ENCODE measurements at regions of chr20 and their contacts with region 1.

Region 1: DNA sequence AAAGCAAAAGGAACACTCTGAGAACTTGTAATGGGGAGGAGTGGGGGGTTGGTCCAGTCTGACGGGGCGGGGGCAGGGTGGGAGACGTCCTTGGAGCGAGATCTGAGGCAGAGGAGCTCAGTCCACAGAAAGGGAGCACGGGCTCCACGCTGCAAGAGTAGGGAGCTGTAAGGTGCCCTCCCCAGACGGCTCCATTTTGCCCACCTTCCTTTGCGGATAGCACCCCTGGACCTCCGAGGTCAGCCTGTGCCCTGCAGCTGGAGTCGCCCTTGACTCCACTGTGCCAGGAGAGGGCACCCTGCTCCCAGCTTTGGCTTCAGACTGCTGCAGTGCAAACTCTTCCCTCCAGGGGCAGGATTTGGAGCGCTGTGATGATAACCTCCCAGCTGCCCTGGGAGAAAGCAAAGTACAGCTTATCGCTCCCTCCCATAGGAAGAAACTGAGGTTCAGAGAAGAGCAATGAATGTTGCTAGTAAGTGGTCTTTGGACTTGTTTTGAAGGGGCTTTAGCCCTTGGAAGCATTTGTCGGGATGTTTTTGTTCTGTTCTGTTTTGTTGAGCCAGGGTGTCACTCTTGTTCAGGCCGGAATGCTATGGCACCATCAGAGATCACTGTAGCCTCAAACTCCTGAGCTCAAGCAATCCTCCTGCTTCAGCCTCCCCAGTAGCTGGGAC is 9.5 kb upstream of the AHCY start:
- DNase-seq: peak; percentile 75 to 92
- H3K4me3 ChIP-seq: no peak overlapping the region
- H3K27ac ChIP-seq: peak overlapping the region; percentile 98; the same call in 1 of the 2 replicates
- H3K4me1 ChIP-seq: peaks cover 50% of the 10 kb centered on the region
- H3K27me3 ChIP-seq: no peaks in the 10 kb centered on the region
- CTCF ChIP-seq: peak; percentile 98

Region 2: GRCh38 chr20:34324541-34324940 is 11.9 kb after region 1 on chr20:
- CTCF ChIA-PET with region 1: no interaction called
- POLR2A ChIA-PET with region 1: no interaction called
- intact Hi-C with region 1: no loop called
- DNase-seq: no peak
- H3K4me3 ChIP-seq: no peak overlapping the region
- H3K27ac ChIP-seq: no peak overlapping the region
- H3K4me1 ChIP-seq: peaks cover 12% of the 10 kb centered on the region
- H3K27me3 ChIP-seq: no peaks in the 10 kb centered on the region
- CTCF ChIP-seq: no peak

Region 3: GRCh38 chr20:34334654-34335407 is 22.1 kb after region 1 on chr20:
- CTCF ChIA-PET with region 1: interaction called, 5 read pairs
- POLR2A ChIA-PET with region 1: interaction called, 11 read pairs
- intact Hi-C with region 1: loop called (anchors 1 kb)
- DNase-seq: peak; percentile 43 to 60
- H3K4me3 ChIP-seq: no peak overlapping the region
- H3K27ac ChIP-seq: peak overlapping the region; percentile 92
- H3K4me1 ChIP-seq: peaks cover 40% of the 10 kb centered on the region
- H3K27me3 ChIP-seq: no peaks in the 10 kb centered on the region
- CTCF ChIP-seq: no peak

Region 4: DNA sequence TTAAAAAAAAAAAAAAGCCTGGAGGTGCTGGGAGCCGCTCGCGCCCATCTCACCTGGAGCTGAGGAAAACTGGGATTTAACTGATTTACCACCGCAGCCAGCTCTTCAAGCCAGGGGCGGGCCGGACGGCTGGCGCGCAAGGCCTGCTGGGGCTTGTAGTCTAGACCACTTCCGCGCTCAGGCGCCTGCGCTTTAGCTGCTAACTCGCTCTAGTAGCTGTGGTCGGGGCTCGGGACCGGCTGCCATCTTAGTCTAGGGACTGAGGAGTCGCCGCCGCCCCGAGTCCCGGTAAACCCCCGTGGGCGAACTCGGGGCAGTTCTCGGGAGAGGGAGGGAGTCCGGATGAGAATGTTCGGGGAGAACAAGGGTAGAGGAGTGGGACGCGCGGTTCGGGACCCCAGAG is 50.4 kb after region 1 on chr20 and contains the start of gene ITCH:
- CTCF ChIA-PET with region 1: interaction called, 24 read pairs
- POLR2A ChIA-PET with region 1: interaction called, 8 read pairs
- intact Hi-C with region 1: loop called (anchors 1 kb)
- DNase-seq: peak; percentile 89 to 95
- H3K4me3 ChIP-seq: peak within 1 kb of the TSS; percentile 91
- H3K27ac ChIP-seq: peak within 1 kb of the TSS; percentile 94
- H3K4me1 ChIP-seq: peaks cover 55% of the 10 kb centered on the region
- H3K27me3 ChIP-seq: no peaks in the 10 kb centered on the region
- CTCF ChIP-seq: no peak
- total RNA-seq, gene ITCH: 91.6 and 144 TPM in 2 replicates

Region 5: DNA sequence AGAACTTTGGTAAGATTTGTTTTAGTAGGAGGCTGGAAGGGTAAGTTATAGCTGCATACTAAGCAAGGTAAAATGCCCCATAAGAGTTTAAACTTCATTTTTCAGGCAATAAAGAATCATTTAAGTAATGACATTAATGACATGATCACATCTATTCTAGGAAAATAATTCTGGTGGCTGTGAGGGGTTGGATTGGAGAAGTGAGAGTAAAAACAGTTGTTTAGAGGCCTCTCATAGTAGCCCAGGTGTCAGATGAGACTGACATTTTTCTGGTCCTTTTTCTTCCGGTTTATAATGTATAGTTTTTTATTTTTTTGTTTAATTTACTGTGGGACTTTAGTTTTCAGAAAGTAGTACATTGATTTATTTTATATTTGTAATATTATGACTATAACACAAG is 91.2 kb after region 1 on chr20:
- CTCF ChIA-PET with region 1: interaction called, 12 read pairs
- POLR2A ChIA-PET with region 1: interaction called, 7 read pairs
- intact Hi-C with region 1: loop called (anchors 1 kb)
- DNase-seq: no peak
- H3K4me3 ChIP-seq: no peak overlapping the region
- H3K27ac ChIP-seq: peak overlapping the region; percentile 20
- H3K4me1 ChIP-seq: peaks cover 38% of the 10 kb centered on the region
- H3K27me3 ChIP-seq: no peaks in the 10 kb centered on the region
- CTCF ChIP-seq: no peak

Region 6: GRCh38 chr20:34473262-34473883 is 160.7 kb after region 1 on chr20:
- CTCF ChIA-PET with region 1: interaction called, 8 read pairs
- POLR2A ChIA-PET with region 1: no interaction called
- intact Hi-C with region 1: loop called (anchors 1 kb)
- DNase-seq: peak in 1 of 2 experiments; percentile 31
- H3K4me3 ChIP-seq: no peak overlapping the region
- H3K27ac ChIP-seq: no peak overlapping the region; the same call in 1 of the 2 replicates
- H3K4me1 ChIP-seq: peaks cover 8% of the 10 kb centered on the region; the same call in 1 of the 2 replicates
- H3K27me3 ChIP-seq: no peaks in the 10 kb centered on the region
- CTCF ChIP-seq: peak; percentile 35; the same call in 1 of the 2 replicates

Region 7: GRCh38 chr20:34579191-34579978 is 266.7 kb after region 1 on chr20:
- CTCF ChIA-PET with region 1: no interaction called
- POLR2A ChIA-PET with region 1: no interaction called
- intact Hi-C with region 1: loop called (anchors 5 kb)
- DNase-seq: peak; percentile 61 to 78
- H3K4me3 ChIP-seq: no peak overlapping the region
- H3K27ac ChIP-seq: no peak overlapping the region
- H3K4me1 ChIP-seq: peaks cover 31% of the 10 kb centered on the region
- H3K27me3 ChIP-seq: no peaks in the 10 kb centered on the region
- CTCF ChIP-seq: peak; percentile 79

Region 8: GRCh38 chr20:35001596-35002362 is 689.1 kb after region 1 on chr20:
- CTCF ChIA-PET with region 1: no interaction called
- POLR2A ChIA-PET with region 1: no interaction called
- intact Hi-C with region 1: no loop called
- DNase-seq: no peak
- H3K4me3 ChIP-seq: no peak overlapping the region
- H3K27ac ChIP-seq: no peak overlapping the region
- H3K4me1 ChIP-seq: no peaks in the 10 kb centered on the region
- H3K27me3 ChIP-seq: no peaks in the 10 kb centered on the region
- CTCF ChIP-seq: no peak; the same call in 1 of the 2 replicates

Measured in PC-9 (cell line).